ENCODE measurements at regions of chr2 and their contacts with region 1.

Region 1: GRCh38 chr2:43161650-43162510 is 64.5 kb downstream of the ZFP36L2 start:
- DNase-seq: peak; percentile 94 to 98
- H3K4me3 ChIP-seq: peak overlapping the region; percentile 19
- H3K4me3 Mint-ChIP-seq: peak overlapping the region; percentile 56
- H3K27ac Mint-ChIP-seq: peak overlapping the region; percentile 95
- H3K4me1 ChIP-seq: peaks cover 79% of the 10 kb centered on the region
- H3K4me1 Mint-ChIP-seq: peaks cover 59% of the 10 kb centered on the region
- H3K27me3 ChIP-seq: no peaks in the 10 kb centered on the region
- H3K27me3 Mint-ChIP-seq: no peaks in the 10 kb centered on the region
- CTCF ChIP-seq: peak; percentile 32 to 58

Region 2: GRCh38 chr2:42360890-42361727 is 800.8 kb before region 1 on chr2 and contains the start of gene COX7A2L:
- CTCF ChIA-PET with region 1: no interaction called
- POLR2A ChIA-PET with region 1: no interaction called
- intact Hi-C with region 1: no loop called
- DNase-seq: peak; percentile 98
- H3K4me3 ChIP-seq: peak within 1 kb of the TSS; percentile 91
- H3K4me3 Mint-ChIP-seq: peak within 1 kb of the TSS; percentile 89
- H3K27ac Mint-ChIP-seq: peak within 1 kb of the TSS; percentile 97
- H3K4me1 ChIP-seq: peaks cover 8% of the 10 kb centered on the region; the same call in 1 of the 2 replicates
- H3K4me1 Mint-ChIP-seq: peaks cover 15% of the 10 kb centered on the region
- H3K27me3 ChIP-seq: no peaks in the 10 kb centered on the region
- H3K27me3 Mint-ChIP-seq: no peaks in the 10 kb centered on the region
- CTCF ChIP-seq: peak in 1 of 2 experiments; percentile 39
- total RNA-seq, gene COX7A2L: 117 and 125 TPM in 2 replicates

Region 3: GRCh38 chr2:43024515-43025011 is 137.3 kb before region 1 on chr2:
- CTCF ChIA-PET with region 1: no interaction called
- POLR2A ChIA-PET with region 1: no interaction called
- intact Hi-C with region 1: loop called (anchors 1 kb)
- DNase-seq: peak; percentile 77 to 82
- H3K4me3 ChIP-seq: no peak overlapping the region
- H3K4me3 Mint-ChIP-seq: no peak overlapping the region
- H3K27ac Mint-ChIP-seq: peak overlapping the region; percentile 36
- H3K4me1 ChIP-seq: peaks cover 38% of the 10 kb centered on the region
- H3K4me1 Mint-ChIP-seq: peaks cover 34% of the 10 kb centered on the region
- H3K27me3 ChIP-seq: no peaks in the 10 kb centered on the region
- H3K27me3 Mint-ChIP-seq: no peaks in the 10 kb centered on the region
- CTCF ChIP-seq: peak; percentile 77 to 92

Region 4: DNA sequence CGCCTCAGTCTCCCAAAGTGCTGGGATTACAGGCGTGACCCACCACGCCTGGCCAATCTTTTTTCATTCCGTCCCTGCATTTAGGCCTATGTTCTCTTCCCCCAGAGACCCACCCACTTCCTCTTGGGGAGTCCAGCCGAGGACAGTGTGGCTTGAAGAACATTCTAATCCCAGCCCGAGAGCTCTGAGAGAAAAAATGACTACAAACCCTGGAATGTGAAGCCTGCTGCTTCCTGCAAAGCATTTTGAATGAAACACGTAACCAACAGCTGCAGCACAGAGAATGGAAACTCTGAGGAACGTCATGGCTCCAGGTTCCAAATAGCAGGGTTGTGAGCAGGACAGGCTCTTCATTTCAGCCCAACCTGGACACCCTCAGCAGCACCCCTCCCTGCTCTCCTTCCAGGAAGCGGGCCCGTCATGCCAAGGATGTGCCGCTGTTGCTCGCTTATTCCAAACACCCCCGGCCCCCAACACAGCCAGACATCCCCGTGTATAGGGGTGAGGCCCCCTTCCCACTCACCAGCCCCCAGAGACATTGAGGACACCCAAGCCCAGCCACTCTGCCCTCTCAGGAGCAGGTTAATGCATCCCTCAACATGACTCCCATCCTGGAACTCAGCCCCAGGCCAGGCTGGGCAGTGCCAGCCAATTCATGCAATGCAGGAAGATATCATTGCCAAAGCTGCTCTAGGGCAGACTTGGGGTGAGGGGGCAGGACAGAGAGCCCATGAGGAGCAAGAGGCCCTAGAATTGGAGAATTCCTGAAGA is 75.2 kb before region 1 on chr2:
- CTCF ChIA-PET with region 1: interaction called, 3 read pairs
- POLR2A ChIA-PET with region 1: interaction called, 7 read pairs
- intact Hi-C with region 1: loop called (anchors 1 kb)
- DNase-seq: peak in 1 of 2 experiments; percentile 21
- H3K4me3 ChIP-seq: no peak overlapping the region
- H3K4me3 Mint-ChIP-seq: no peak overlapping the region
- H3K27ac Mint-ChIP-seq: peak overlapping the region; percentile 89
- H3K4me1 ChIP-seq: peaks cover 68% of the 10 kb centered on the region
- H3K4me1 Mint-ChIP-seq: peaks cover 54% of the 10 kb centered on the region
- H3K27me3 ChIP-seq: no peaks in the 10 kb centered on the region
- H3K27me3 Mint-ChIP-seq: no peaks in the 10 kb centered on the region
- CTCF ChIP-seq: no peak

Region 5: GRCh38 chr2:43131024-43131889 is 30.6 kb before region 1 on chr2:
- CTCF ChIA-PET with region 1: no interaction called
- POLR2A ChIA-PET with region 1: no interaction called
- intact Hi-C with region 1: loop called (anchors 2 kb)
- DNase-seq: peak; percentile 59 to 65
- H3K4me3 ChIP-seq: no peak overlapping the region
- H3K4me3 Mint-ChIP-seq: no peak overlapping the region
- H3K27ac Mint-ChIP-seq: peak overlapping the region; percentile 51
- H3K4me1 ChIP-seq: peaks cover 50% of the 10 kb centered on the region
- H3K4me1 Mint-ChIP-seq: peaks cover 53% of the 10 kb centered on the region
- H3K27me3 ChIP-seq: no peaks in the 10 kb centered on the region
- H3K27me3 Mint-ChIP-seq: no peaks in the 10 kb centered on the region
- CTCF ChIP-seq: peak in 1 of 2 experiments; percentile 33

Region 6: DNA sequence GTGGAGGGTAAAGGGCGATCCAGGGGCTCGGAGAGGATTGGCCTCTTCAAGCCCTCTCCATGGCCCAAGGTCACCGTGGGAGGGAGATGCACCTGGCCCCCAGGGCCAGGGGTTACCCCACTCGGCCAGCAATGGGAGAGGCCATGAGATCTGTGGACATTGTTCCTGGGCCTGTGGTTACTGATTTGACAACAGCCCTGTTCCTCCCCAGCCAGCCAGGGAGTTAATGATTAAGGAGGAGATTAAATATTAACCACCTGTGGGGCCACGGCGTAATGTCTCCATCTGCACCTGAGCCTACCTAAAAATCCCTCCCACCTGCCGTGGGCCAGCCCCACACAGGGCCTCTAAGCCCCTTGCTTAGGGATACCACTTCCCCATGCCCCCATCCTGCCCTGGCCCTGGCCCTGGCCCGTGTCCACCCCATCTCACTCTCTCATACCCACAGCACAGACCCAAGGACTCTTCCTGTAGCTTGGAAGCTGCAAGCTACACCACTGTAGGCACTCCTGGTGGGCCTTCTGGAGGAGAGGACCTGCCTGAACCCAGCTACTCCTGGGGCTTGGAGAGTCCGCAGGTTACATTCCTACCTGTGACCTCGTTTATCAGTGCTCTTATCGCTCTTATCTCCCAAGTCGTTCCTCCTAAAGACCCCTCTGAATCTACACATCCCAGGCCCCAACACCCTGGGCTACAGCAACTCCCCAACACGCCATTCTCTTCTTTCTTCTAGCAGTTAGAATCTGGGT is 32.4 kb after region 1 on chr2:
- CTCF ChIA-PET with region 1: interaction called, 12 read pairs
- POLR2A ChIA-PET with region 1: interaction called, 24 read pairs
- intact Hi-C with region 1: loop called (anchors 1 kb)
- DNase-seq: peak; percentile 97 to 98
- H3K4me3 ChIP-seq: 0 out of 2 replicates have a peak overlapping the region, but pooled peaks have one; percentile 0
- H3K4me3 Mint-ChIP-seq: peak overlapping the region; percentile 67
- H3K27ac Mint-ChIP-seq: peak overlapping the region; percentile 91
- H3K4me1 ChIP-seq: peaks cover 86% of the 10 kb centered on the region
- H3K4me1 Mint-ChIP-seq: peaks cover 60% of the 10 kb centered on the region
- H3K27me3 ChIP-seq: no peaks in the 10 kb centered on the region
- H3K27me3 Mint-ChIP-seq: no peaks in the 10 kb centered on the region
- CTCF ChIP-seq: no peak

Region 7: GRCh38 chr2:43424262-43425207 is 262.7 kb after region 1 on chr2:
- CTCF ChIA-PET with region 1: no interaction called
- POLR2A ChIA-PET with region 1: no interaction called
- intact Hi-C with region 1: loop called (anchors 1 kb)
- DNase-seq: peak in 1 of 2 experiments; percentile 38
- H3K4me3 ChIP-seq: no peak overlapping the region
- H3K4me3 Mint-ChIP-seq: peak overlapping the region; percentile 39
- H3K27ac Mint-ChIP-seq: peak overlapping the region; percentile 66
- H3K4me1 ChIP-seq: peaks cover 80% of the 10 kb centered on the region
- H3K4me1 Mint-ChIP-seq: peaks cover 46% of the 10 kb centered on the region
- H3K27me3 ChIP-seq: no peaks in the 10 kb centered on the region
- H3K27me3 Mint-ChIP-seq: no peaks in the 10 kb centered on the region
- CTCF ChIP-seq: no peak

Measured in Caco-2 (cell line).